OCI-LY7 (cell line): ENCODE measurements at regions of chr6 and their contacts with region 1.

Region 1: DNA sequence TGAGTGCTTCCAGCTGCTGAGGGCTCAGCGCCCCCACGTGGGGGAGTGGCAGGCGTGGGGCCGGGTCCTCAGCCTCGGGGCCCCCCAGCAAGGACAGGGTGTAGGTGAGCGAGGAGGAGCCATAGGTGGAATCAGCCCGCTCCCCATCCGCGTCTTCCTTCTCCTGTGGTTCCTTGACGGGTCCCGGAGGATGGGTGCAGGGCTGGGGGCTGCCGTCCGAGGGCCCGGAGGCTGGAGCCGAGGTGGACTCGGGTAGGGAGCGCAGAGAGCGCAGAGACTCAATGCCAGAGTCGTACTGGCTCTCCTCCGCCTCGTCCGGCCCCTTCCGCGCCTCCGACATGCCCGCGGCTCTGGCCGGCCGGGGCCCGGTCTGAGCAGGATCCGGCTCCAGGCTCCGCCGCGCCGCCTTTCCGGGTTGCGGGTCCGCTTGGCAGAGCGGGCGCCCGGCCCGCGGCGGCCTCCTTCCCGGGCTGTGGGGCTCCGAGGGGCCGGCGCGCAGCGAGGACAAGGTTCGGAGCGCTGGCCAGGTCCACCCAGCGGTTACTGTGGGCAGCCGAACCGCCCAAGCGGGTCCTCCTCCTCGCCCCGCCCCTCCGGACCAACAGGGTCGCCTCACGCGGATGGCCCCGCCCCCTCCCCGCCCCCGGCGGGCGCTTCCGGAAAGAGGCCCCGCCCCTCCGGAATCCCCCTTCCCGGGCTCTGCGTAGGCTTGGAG is at the start of gene NFKBIE:
- DNase-seq: peak; percentile 88
- H3K4me3 ChIP-seq: peak within 1 kb of the TSS; percentile 86
- H3K27ac ChIP-seq: peak within 1 kb of the TSS; percentile 85
- H3K4me1 ChIP-seq: peaks cover 68% of the 10 kb centered on the region
- CTCF ChIP-seq: peak; percentile 79
- total RNA-seq, gene NFKBIE: 27.5 and 43.1 TPM in 2 replicates

Region 2: DNA sequence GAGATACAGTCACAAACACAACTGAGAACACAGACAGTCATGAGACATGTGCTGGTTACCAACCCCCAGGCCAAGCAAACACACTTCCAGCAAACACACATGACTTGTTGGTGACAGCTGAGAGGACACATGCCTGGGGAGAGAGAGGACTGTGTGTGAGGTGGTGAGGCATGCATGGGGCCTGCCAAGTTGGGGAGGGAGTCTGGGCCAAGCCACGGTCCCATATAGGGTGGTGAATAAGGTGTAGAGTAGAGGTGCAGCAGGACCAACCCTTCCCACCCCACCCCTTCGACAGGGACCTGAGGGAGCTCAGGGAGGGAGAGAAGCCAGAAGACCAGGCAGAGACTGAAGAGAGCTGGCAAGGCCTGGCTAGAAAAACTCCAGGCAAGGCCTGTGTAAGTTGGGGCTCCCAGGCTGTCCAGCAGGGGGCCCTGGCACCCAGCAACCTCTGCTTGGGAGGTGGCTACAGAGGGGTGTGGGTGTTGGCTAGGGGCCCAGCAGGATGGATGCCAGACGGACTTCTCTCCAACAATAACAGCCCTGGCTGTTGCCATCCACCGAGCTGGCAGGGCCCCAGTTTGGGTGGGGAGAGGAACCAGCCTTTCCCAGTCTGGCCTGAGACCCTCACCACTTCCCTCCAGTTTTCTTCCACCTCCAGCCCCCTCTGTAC is 43.7 kb before region 1 on chr6:
- CTCF ChIA-PET with region 1: interaction called, 4 read pairs
- POLR2A ChIA-PET with region 1: no interaction called
- intact Hi-C with region 1: loop called (anchors 2 kb)
- DNase-seq: peak; percentile 85
- H3K4me3 ChIP-seq: no peak overlapping the region
- H3K27ac ChIP-seq: peak overlapping the region; percentile 56
- H3K4me1 ChIP-seq: peaks cover 82% of the 10 kb centered on the region
- CTCF ChIP-seq: peak; percentile 81

Region 3: DNA sequence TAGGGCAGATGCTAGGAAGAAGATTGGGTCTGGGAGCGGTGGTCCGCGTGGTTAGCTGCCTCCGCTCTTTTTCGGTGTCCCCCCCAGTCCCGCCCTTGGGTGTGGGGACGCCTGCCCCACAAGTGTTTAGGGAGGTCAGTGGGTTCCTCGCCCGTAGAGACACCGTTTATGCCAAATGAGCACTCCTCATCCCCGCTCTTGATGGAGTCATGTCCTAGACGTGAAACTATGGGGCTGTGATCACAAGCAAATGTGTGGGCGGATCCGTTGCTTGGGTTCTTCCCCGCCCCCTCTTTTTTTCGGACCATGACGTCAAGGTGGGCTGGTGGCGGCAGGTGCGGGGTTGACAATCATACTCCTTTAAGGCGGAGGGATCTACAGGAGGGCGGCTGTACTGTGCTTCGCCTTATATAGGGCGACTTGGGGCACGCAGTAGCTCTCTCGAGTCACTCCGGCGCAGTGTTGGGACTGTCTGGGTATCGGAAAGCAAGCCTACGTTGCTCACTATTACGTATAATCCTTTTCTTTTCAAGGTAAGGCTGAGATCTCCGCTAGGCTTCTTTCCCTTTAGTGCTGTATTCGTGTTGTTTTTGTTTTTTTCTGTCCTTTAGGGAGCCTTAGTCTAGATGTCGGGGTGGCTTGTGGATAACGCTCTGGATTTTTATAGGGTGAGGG is 18.4 kb before region 1 on chr6 and contains the start of gene HSP90AB1:
- CTCF ChIA-PET with region 1: interaction called, 4 read pairs
- POLR2A ChIA-PET with region 1: interaction called, 22 read pairs
- intact Hi-C with region 1: loop called (anchors 1 kb)
- DNase-seq: peak; percentile 99
- H3K4me3 ChIP-seq: peak within 1 kb of the TSS; percentile 93
- H3K27ac ChIP-seq: peak within 1 kb of the TSS; percentile 81
- H3K4me1 ChIP-seq: peaks cover 45% of the 10 kb centered on the region
- CTCF ChIP-seq: no peak
- total RNA-seq, gene HSP90AB1: 911 and 1,004 TPM in 2 replicates

Region 4: GRCh38 chr6:44304282-44305199 is 39.4 kb after region 1 on chr6:
- CTCF ChIA-PET with region 1: interaction called, 19 read pairs
- POLR2A ChIA-PET with region 1: no interaction called
- intact Hi-C with region 1: loop called (anchors 1 kb)
- DNase-seq: peak; percentile 50
- H3K4me3 ChIP-seq: no peak overlapping the region
- H3K27ac ChIP-seq: no peak overlapping the region
- H3K4me1 ChIP-seq: no peaks in the 10 kb centered on the region
- CTCF ChIP-seq: peak; percentile 83

Region 5: GRCh38 chr6:44338228-44339122 is 73.3 kb after region 1 on chr6:
- CTCF ChIA-PET with region 1: no interaction called
- POLR2A ChIA-PET with region 1: no interaction called
- intact Hi-C with region 1: loop called (anchors 1 kb)
- DNase-seq: peak; percentile 80
- H3K4me3 ChIP-seq: no peak overlapping the region
- H3K27ac ChIP-seq: no peak overlapping the region
- H3K4me1 ChIP-seq: no peaks in the 10 kb centered on the region
- CTCF ChIP-seq: peak; percentile 86

Region 6: GRCh38 chr6:44387346-44388133 is 122.4 kb after region 1 on chr6 and contains the start of gene CDC5L:
- CTCF ChIA-PET with region 1: interaction called, 9 read pairs
- POLR2A ChIA-PET with region 1: interaction called, 3 read pairs
- intact Hi-C with region 1: loop called (anchors 5 kb)
- DNase-seq: peak; percentile 99
- H3K4me3 ChIP-seq: peak within 1 kb of the TSS; percentile 92
- H3K27ac ChIP-seq: peak within 1 kb of the TSS; percentile 86
- H3K4me1 ChIP-seq: peaks cover 24% of the 10 kb centered on the region
- CTCF ChIP-seq: no peak
- total RNA-seq, gene CDC5L: 21.5 and 22.5 TPM in 2 replicates

Region 7: GRCh38 chr6:44456070-44456965 is 191.2 kb after region 1 on chr6:
- CTCF ChIA-PET with region 1: no interaction called
- POLR2A ChIA-PET with region 1: no interaction called
- intact Hi-C with region 1: loop called (anchors 1 kb)
- DNase-seq: peak; percentile 66
- H3K4me3 ChIP-seq: no peak overlapping the region
- H3K27ac ChIP-seq: no peak overlapping the region
- H3K4me1 ChIP-seq: no peaks in the 10 kb centered on the region
- CTCF ChIP-seq: peak; percentile 89